Panc1 (cell line): ENCODE measurements at regions of chr10 and their contacts with region 1.

Region 1: DNA sequence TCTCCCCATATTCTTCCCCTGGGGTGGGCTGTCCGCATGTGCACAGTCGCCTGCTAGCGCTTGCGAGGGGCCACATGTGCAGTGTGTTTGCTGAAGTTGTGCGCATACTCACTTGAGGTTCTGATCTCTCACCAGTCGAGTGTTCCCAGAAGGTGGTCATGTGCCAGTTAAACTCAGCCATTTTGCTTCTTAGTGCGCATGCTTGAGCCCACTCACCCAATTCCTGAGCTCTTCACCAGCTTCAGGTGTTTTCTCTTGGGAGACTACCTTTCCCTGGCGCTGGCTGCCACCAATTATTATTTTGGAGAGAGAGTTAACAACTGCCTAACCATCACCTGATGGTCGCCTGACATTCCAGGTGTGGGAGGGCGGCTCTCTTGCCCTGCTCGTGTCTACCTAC is 25.2 kb upstream of the CPN1 start:
- DNase-seq: no peak
- ATAC-seq: no peak
- H3K4me3 ChIP-seq: no peak overlapping the region
- H3K27ac ChIP-seq: no peak overlapping the region
- H3K4me1 ChIP-seq: no peaks in the 10 kb centered on the region
- H3K27me3 ChIP-seq: no peaks in the 10 kb centered on the region
- CTCF ChIP-seq: no peak

Region 2: GRCh38 chr10:99945263-99945662 is 161.6 kb before region 1 on chr10:
- CTCF ChIA-PET with region 1: no interaction called
- POLR2A ChIA-PET with region 1: no interaction called
- in situ Hi-C with region 1: no loop called
- intact Hi-C with region 1: no loop called
- DNase-seq: no peak
- ATAC-seq: peak; percentile 49; the same call in 1 of the 2 replicates
- H3K4me3 ChIP-seq: no peak overlapping the region
- H3K27ac ChIP-seq: peak overlapping the region; percentile 25; the same call in 1 of the 2 replicates
- H3K4me1 ChIP-seq: no peaks in the 10 kb centered on the region; the same call in 1 of the 2 replicates
- H3K27me3 ChIP-seq: no peaks in the 10 kb centered on the region
- CTCF ChIP-seq: no peak

Region 3: GRCh38 chr10:100089241-100089640 is 17.6 kb before region 1 on chr10:
- CTCF ChIA-PET with region 1: interaction called, 13 read pairs
- POLR2A ChIA-PET with region 1: no interaction called
- in situ Hi-C with region 1: no loop called
- intact Hi-C with region 1: no loop called
- DNase-seq: no peak
- ATAC-seq: no peak
- H3K4me3 ChIP-seq: no peak overlapping the region
- H3K27ac ChIP-seq: no peak overlapping the region
- H3K4me1 ChIP-seq: no peaks in the 10 kb centered on the region
- H3K27me3 ChIP-seq: 0 out of 2 replicates have a peak, but pooled peaks cover 2% of the 10 kb centered on the region
- CTCF ChIP-seq: no peak

Region 4: DNA sequence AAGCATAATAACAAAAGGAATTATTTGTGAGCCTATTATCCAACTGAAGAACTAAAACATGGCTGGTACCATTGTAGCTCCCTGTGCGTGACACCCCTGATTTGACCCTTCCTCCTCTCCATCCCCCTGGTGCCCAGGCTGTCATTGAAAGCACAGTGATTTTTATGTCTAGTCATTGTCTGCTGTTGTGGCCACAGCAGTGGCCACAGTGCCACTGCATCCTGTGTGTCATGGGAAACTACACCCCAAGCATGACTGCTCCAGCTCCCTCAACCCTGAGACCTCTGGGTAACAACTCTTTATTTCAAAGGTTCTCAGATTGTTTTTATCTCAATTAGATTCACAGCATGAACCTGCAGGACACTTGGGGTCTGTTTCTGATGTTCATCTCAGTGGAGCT is 26.9 kb after region 1 on chr10:
- CTCF ChIA-PET with region 1: no interaction called
- POLR2A ChIA-PET with region 1: no interaction called
- in situ Hi-C with region 1: no loop called
- intact Hi-C with region 1: no loop called
- DNase-seq: no peak
- ATAC-seq: no peak
- H3K4me3 ChIP-seq: no peak overlapping the region
- H3K27ac ChIP-seq: no peak overlapping the region
- H3K4me1 ChIP-seq: no peaks in the 10 kb centered on the region
- H3K27me3 ChIP-seq: no peaks in the 10 kb centered on the region
- CTCF ChIP-seq: no peak

Region 5: GRCh38 chr10:100148353-100149211 is 41.7 kb after region 1 on chr10:
- CTCF ChIA-PET with region 1: no interaction called
- POLR2A ChIA-PET with region 1: no interaction called
- in situ Hi-C with region 1: no loop called
- intact Hi-C with region 1: no loop called
- DNase-seq: peak; percentile 51
- ATAC-seq: peak; percentile 43; the same call in 1 of the 2 replicates
- H3K4me3 ChIP-seq: no peak overlapping the region
- H3K27ac ChIP-seq: no peak overlapping the region
- H3K4me1 ChIP-seq: no peaks in the 10 kb centered on the region
- H3K27me3 ChIP-seq: no peaks in the 10 kb centered on the region
- CTCF ChIP-seq: no peak